ENCODE measurements at regions of chr21 and their contacts with region 1.

Region 1: DNA sequence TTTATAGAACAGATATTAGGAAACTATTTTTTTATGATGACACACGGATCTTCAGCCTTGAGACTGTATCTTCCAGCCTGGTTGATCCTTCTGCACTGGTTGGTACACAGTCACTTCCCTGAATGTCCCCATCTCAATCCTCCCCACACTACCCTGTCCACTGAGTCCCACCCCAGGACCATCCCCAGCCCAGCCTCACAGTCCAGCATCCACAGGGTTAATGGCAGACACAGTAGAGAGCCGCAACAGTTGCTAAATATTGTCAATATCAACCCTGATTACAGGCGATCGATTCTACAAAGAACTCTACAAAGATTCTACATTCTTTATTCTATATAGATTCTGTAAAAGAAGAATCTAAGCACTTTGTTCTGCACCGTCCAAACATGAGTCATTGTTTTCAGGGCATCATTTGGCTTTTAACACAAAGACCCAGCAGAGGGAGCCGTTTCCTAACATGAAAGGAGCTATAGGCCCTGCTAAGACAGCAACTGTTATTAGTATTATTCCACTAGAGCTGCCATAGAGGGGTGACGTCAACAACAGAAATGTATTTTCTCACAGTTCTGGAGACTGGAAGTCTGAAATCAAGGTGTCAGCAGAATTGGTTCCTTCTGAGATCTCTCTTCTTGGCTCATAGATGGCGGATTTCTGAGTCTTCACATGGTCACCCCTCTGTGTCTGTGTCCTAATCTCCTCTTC is 30.1 kb upstream of the IFNAR2 start:
- DNase-seq: peak; percentile 40
- ATAC-seq: peak; percentile 76

Region 2: GRCh38 chr21:31597683-31598082 is 1602.0 kb before region 1 on chr21:
- intact Hi-C with region 1: no loop called
- DNase-seq: no peak
- ATAC-seq: no peak

Region 3: DNA sequence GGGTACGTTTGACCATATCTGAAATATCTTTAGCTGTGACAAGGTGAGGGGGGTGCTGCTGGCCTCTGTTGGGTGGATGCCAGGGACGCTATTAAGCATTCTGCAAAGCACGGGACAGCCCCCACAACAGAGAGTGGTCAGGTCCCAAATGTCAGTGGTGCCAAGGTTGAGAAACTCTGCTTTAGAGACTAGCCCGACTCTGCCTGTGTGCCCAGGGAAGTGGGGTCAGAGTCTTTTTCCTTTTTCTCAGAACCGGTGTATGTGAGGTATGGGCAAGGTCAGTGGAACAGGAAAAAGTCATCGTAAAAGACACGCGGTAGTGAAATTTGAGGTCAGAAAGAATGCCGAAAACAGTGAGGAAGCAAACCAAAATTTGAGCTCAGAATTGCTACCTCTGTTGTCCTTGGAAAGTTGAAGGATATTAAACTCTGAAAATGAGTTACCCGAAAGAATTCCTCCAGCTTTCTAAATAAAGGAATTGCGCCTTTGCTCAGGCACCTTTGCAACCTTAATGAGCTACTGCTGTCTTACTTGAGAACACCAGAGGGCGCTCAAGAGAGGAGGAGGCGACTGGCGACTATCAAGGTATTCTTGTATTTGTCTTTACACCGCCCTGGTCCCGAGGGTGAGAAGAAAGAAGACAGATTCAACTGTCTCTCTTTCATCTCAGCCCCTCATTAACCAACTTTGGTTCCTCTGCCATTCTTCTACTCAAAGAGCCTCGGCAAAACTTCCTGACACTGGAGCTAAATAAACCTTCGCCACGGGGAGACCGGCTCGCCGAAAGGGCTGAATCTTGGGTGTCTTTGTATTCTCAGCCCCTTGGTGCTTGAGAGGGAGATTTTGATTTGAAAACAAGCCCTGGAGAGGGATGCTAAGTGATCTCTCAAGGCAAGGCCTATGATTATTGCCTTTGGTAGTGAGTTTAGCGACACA is 259.3 kb before region 1 on chr21:
- intact Hi-C with region 1: loop called (anchors 10 kb)
- DNase-seq: no peak
- ATAC-seq: peak; percentile 65

Region 4: DNA sequence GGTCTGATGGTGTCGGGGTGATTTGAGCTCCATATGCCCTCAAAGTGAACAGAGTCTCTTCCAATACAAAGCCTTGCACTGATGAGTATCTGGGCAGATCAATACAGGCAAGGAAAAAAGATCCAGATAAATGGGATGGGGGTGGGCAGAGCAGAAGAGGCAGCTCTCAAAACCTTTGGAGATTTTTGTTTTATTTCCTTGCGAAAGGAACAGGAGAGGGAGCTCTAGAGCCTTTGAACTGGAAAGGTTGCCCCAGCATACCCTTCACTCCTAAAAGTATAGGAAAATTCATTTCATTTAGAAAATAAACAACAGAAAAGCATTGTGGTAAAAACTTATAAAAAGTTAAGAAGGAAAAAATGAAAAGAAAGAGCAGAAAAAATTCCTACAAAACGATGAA is 205.4 kb before region 1 on chr21:
- intact Hi-C with region 1: loop called (anchors 10 kb)
- DNase-seq: no peak
- ATAC-seq: no peak

Region 5: DNA sequence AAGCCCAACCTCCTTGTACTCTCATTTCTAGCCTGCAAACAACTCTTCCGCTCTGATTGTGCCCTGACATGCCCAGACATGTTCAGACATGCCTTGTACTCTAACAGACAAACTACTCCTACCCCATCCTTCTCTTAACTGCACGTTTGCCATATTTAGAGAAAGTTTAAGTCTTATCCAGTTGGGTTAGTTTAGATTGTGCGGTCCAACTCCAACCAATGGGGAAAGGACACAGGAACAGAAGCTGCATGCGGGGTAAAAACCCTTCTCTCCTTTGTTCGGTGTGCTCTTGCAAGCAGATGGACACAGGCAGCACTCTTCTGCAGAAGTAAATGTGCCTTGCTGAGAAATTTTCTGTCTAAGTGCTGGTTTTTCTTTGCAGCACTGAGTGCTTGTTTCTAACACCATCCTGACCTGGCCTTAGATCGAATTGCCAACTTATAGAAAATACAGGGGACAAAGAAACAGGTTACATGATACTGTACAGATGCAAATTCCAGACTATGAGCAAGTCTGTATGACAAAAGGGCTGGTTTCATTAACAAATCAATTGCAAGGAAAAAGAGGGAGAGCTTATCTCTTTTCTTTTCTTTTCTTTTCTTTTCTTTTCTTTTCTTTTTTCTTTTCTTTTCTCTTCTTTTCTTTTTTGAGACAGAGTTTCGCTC is 167.8 kb after region 1 on chr21:
- intact Hi-C with region 1: loop called (anchors 5 kb)
- DNase-seq: no peak
- ATAC-seq: no peak

Region 6: GRCh38 chr21:33449616-33450015 is 249.9 kb after region 1 on chr21:
- intact Hi-C with region 1: loop called (anchors 5 kb)
- DNase-seq: no peak
- ATAC-seq: no peak

Region 7: DNA sequence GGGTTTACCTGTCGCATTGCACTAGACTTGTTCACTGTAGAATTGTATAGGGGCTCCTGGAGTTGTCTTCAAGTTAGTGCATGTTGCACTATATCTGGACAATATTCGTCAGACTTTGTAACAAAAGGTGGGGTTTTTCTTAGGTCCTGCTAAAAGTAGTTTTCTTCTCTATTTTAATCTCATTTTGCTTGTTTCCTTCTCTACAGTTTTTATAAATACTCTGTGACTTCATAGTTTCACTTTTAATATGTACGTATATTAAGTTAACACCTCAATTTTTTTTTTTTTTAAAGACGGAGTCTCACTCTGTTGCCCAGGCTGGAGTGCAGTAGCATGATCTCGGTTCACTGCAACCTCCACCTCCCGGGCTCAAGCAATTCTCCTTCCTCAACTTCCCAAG is 847.2 kb after region 1 on chr21:
- intact Hi-C with region 1: no loop called
- DNase-seq: no peak
- ATAC-seq: no peak